Activated CD4-positive, alpha-beta memory T cell treated with anti-CD3 and anti-CD28 coated beads, Interleukin-2, amount 10 ng/mL, durations not matched to agents 7 days and 5 days (primary cell): ENCODE measurements at regions of chr12 and their contacts with region 1.

Region 1: DNA sequence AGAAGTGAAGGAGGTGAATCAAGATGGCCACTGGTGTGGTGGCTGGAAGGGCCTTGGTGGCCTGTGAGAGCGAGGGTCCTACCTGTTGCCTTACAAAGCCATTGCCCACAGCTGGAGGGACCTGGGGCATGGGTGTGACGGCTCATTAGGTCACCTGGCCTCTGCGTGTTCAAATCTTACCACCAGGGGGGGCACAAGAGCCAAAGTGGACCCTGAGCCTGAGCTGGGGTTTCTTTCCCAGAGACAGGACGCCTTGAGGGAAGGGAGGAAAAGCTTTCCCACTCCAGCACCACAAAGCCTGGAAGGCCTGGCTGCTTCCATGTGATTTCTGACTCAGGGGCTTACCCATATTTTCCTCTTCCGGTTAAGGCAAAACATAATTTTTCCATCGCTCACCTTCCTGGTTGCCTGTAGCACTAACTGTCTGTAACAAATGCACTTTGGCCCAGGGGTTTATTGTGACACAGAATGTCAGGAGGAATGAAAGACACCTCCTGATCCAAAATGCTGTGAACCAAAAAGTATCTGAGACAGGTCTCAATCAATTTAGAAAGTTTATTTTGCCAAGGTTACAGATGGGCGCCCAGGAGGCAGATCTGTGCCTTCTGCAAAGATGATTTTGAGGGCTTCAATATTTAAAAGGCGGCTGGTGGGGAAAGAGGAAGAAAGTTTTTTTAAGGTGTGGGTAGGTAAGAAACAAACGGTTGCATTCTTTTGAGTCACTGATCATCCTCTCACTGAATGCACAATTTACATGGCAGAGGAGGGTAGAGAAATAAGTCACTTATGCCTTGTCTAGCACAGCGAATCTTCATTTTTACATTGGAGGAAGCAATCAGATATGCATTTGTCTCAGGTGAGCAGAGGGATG is 4.3 kb upstream of the CD9 start:
- DNase-seq: peak; percentile 72
- H3K4me3 Mint-ChIP-seq: no peak overlapping the region
- H3K27ac Mint-ChIP-seq: no peak overlapping the region
- H3K4me1 Mint-ChIP-seq: peaks cover 11% of the 10 kb centered on the region
- H3K27me3 Mint-ChIP-seq: peaks cover 49% of the 10 kb centered on the region

Region 2: GRCh38 chr12:6267139-6267721 is 71.3 kb after region 1 on chr12:
- CTCF ChIA-PET with region 1: interaction called, 21 read pairs
- POLR2A ChIA-PET with region 1: no interaction called
- DNase-seq: no peak
- H3K4me3 Mint-ChIP-seq: no peak overlapping the region
- H3K27ac Mint-ChIP-seq: no peak overlapping the region
- H3K4me1 Mint-ChIP-seq: peaks cover 5% of the 10 kb centered on the region
- H3K27me3 Mint-ChIP-seq: peaks cover 5% of the 10 kb centered on the region

Region 3: GRCh38 chr12:6272300-6273204 is 76.7 kb after region 1 on chr12:
- CTCF ChIA-PET with region 1: interaction called, 92 read pairs
- POLR2A ChIA-PET with region 1: interaction called, 3 read pairs
- DNase-seq: no peak
- H3K4me3 Mint-ChIP-seq: no peak overlapping the region
- H3K27ac Mint-ChIP-seq: no peak overlapping the region
- H3K4me1 Mint-ChIP-seq: no peaks in the 10 kb centered on the region
- H3K27me3 Mint-ChIP-seq: peaks cover 29% of the 10 kb centered on the region

Region 4: GRCh38 chr12:6278439-6279255 is 82.7 kb after region 1 on chr12:
- CTCF ChIA-PET with region 1: interaction called, 92 read pairs
- POLR2A ChIA-PET with region 1: interaction called, 4 read pairs
- DNase-seq: peak; percentile 87
- H3K4me3 Mint-ChIP-seq: peak overlapping the region; percentile 75
- H3K27ac Mint-ChIP-seq: no peak overlapping the region
- H3K4me1 Mint-ChIP-seq: peaks cover 6% of the 10 kb centered on the region
- H3K27me3 Mint-ChIP-seq: peaks cover 44% of the 10 kb centered on the region

Region 5: GRCh38 chr12:6285063-6285477 is 89.2 kb after region 1 on chr12:
- CTCF ChIA-PET with region 1: interaction called, 92 read pairs
- POLR2A ChIA-PET with region 1: interaction called, 3 read pairs
- DNase-seq: peak; percentile 61
- H3K4me3 Mint-ChIP-seq: no peak overlapping the region
- H3K27ac Mint-ChIP-seq: no peak overlapping the region
- H3K4me1 Mint-ChIP-seq: no peaks in the 10 kb centered on the region
- H3K27me3 Mint-ChIP-seq: peaks cover 24% of the 10 kb centered on the region